ENCODE measurements at regions of chr20 and their contacts with region 1.

Region 1: DNA sequence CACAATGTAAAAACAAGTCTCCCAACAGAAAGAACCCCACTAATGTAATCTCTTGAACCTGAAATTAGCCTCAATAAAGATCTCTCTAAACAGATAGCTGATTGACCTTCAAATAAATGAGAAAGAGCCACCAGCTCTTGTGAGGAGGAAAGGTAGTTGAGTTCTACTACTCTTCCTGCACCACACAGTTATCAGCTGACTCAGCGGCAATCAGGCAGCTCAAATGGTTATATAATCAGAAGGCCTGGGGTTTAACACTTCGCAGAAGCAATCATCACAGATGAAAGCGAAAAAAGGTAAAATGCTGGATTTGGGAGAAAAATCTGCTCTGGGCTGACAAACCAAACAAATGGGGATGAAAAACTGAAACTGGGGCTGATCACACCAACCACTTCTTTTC is 91.8 kb downstream of the CHD6 start:
- DNase-seq: no peak

Region 2: GRCh38 chr20:41169781-41170351 is 356.5 kb before region 1 on chr20:
- CTCF ChIA-PET with region 1: no interaction called
- POLR2A ChIA-PET with region 1: no interaction called
- DNase-seq: no peak

Region 3: DNA sequence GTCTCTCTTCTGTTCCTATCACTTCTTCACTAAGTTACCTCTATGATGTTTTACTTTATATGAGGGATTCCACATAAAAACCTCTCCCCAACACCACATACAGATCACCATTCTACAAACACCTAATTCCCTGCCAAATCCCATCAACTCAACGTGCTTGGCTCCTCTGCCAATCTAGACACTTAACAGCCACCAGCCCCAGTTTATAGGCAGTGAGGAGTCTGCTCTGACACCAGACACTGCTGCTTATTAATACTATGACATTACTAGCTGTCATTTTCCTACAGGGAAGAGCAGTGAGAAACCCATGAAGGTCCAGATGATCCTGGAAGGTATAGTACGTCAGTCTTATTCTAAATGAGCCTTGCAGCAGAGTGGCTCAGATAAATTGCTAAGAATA is 12.5 kb before region 1 on chr20:
- CTCF ChIA-PET with region 1: interaction called, 10 read pairs
- POLR2A ChIA-PET with region 1: no interaction called
- DNase-seq: no peak